Natural killer cell (primary cell): ENCODE measurements at regions of chr12 and their contacts with region 1.

Region 1: DNA sequence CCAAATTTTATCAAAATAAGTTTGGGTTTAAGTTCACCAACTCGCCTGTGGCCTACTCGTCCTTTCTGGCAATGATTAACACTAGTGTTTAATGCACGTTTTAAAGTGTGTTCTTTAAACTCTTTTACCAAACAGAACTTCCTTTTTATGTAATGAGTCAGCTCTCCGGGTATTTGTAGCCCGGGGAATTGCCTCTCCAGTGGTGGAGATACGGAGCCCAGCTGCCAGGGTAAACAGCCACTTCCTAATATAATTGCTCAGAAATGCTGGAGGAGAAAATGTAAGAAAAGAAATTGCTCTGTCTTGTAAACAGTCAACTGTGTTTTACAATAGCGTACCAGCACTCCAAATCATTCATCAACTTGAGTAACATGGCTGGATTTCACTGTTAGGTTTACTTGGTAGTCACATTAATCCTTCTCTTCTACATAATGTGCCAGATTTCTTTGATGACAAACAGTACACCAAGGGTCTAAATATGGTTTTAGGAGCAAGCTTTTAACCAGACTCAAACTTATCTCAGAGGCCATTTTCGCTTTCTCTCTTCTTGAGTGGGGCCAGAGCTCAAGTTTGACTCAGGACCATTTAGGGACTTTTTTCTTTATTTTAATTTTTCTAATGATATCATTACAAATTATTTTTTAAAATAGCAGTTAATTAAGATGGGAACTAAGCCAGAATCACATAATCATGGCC is 101.2 kb upstream of the SLC38A2 start:
- DNase-seq: no peak
- ATAC-seq: peak in 2 of 3 donors; percentile 7 to 49
- H3K4me3 ChIP-seq: no peak overlapping the region
- H3K4me3 Mint-ChIP-seq: peak overlapping the region; percentile 53
- H3K27ac ChIP-seq: peak overlapping the region; percentile 39
- H3K27ac Mint-ChIP-seq: peak overlapping the region; percentile 77 to 87
- H3K4me1 ChIP-seq: peaks cover 18% of the 10 kb centered on the region
- H3K4me1 Mint-ChIP-seq: peaks cover 51 to 54% of the 10 kb centered on the region in 2 donors
- H3K27me3 ChIP-seq: no peaks in the 10 kb centered on the region
- H3K27me3 Mint-ChIP-seq: no peaks in the 10 kb centered on the region
- CTCF ChIP-seq: no peak

Region 2: GRCh38 chr12:46562625-46563228 is 88.9 kb after region 1 on chr12:
- intact Hi-C with region 1: loop called (anchors 5 kb)
- DNase-seq: no peak
- ATAC-seq: no peak
- H3K4me3 ChIP-seq: no peak overlapping the region
- H3K4me3 Mint-ChIP-seq: no peak overlapping the region
- H3K27ac ChIP-seq: no peak overlapping the region
- H3K27ac Mint-ChIP-seq: no peak overlapping the region
- H3K4me1 ChIP-seq: no peaks in the 10 kb centered on the region
- H3K4me1 Mint-ChIP-seq: peaks cover 13 to 14% of the 10 kb centered on the region in 2 donors
- H3K27me3 ChIP-seq: no peaks in the 10 kb centered on the region
- H3K27me3 Mint-ChIP-seq: no peaks in the 10 kb centered on the region
- CTCF ChIP-seq: no peak

Region 3: GRCh38 chr12:46635818-46636217 is 162.0 kb after region 1 on chr12:
- intact Hi-C with region 1: no loop called
- DNase-seq: no peak
- ATAC-seq: no peak
- H3K4me3 ChIP-seq: no peak overlapping the region
- H3K4me3 Mint-ChIP-seq: no peak overlapping the region
- H3K27ac ChIP-seq: no peak overlapping the region
- H3K27ac Mint-ChIP-seq: no peak overlapping the region
- H3K4me1 ChIP-seq: no peaks in the 10 kb centered on the region
- H3K4me1 Mint-ChIP-seq: peaks cover 20 to 24% of the 10 kb centered on the region in 2 donors
- H3K27me3 ChIP-seq: no peaks in the 10 kb centered on the region
- H3K27me3 Mint-ChIP-seq: no peaks in the 10 kb centered on the region
- CTCF ChIP-seq: no peak

Region 4: DNA sequence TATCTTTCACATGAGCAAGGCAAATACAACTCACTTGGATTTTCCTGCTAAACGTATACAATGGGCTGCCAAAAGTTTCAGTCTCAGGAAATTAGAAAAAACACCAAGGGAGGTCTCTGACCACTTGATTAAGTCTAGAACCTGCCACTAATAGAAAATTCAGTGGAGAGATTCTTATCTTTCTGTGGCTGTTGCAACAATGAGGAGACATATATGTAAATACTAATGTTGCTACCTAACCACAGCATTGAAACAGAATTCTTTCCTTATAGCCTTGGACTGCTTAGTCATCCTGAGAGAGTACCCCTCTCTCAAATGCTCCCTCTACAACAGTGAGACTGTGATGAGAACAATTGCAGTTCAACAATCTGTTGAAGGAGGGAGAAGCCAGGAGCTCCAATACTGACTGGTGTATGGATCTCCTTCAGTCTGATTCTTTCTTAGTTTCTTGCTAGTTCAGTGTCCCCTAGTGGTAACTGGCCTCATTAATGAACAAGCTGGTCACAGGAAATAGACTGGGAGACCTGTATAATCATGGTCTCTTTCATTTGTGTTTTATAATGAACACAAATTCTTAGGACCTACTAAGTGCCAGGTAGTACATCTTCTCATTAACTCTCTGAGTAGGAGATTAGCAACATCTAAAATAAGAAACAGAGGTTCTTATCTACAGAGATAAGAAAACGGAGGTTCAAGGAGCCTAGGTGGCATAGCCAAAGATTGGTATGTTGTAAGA is 187.5 kb after region 1 on chr12:
- intact Hi-C with region 1: loop called (anchors 2 kb)
- DNase-seq: peak in 1 of 2 donors; percentile 70
- ATAC-seq: peak; percentile 64 to 73 (median 73)
- H3K4me3 ChIP-seq: no peak overlapping the region
- H3K4me3 Mint-ChIP-seq: peak overlapping the region; percentile 56
- H3K27ac ChIP-seq: peak overlapping the region; percentile 35
- H3K27ac Mint-ChIP-seq: peak overlapping the region; percentile 55 to 83
- H3K4me1 ChIP-seq: peaks cover 3% of the 10 kb centered on the region
- H3K4me1 Mint-ChIP-seq: peaks cover 46% of the 10 kb centered on the region in 2 donors
- H3K27me3 ChIP-seq: no peaks in the 10 kb centered on the region
- H3K27me3 Mint-ChIP-seq: no peaks in the 10 kb centered on the region
- CTCF ChIP-seq: peak; percentile 62

Region 5: GRCh38 chr12:46744283-46744682 is 270.5 kb after region 1 on chr12:
- intact Hi-C with region 1: no loop called
- DNase-seq: no peak
- ATAC-seq: no peak
- H3K4me3 ChIP-seq: no peak overlapping the region
- H3K4me3 Mint-ChIP-seq: no peak overlapping the region
- H3K27ac ChIP-seq: no peak overlapping the region
- H3K27ac Mint-ChIP-seq: no peak overlapping the region
- H3K4me1 ChIP-seq: no peaks in the 10 kb centered on the region
- H3K4me1 Mint-ChIP-seq: no peaks in the 10 kb centered on the region
- H3K27me3 ChIP-seq: no peaks in the 10 kb centered on the region
- H3K27me3 Mint-ChIP-seq: peaks cover 0 to under 1% of the 10 kb centered on the region in 2 donors
- CTCF ChIP-seq: no peak